ENCODE measurements at regions of chr16 and their contacts with region 1.

Region 1: DNA sequence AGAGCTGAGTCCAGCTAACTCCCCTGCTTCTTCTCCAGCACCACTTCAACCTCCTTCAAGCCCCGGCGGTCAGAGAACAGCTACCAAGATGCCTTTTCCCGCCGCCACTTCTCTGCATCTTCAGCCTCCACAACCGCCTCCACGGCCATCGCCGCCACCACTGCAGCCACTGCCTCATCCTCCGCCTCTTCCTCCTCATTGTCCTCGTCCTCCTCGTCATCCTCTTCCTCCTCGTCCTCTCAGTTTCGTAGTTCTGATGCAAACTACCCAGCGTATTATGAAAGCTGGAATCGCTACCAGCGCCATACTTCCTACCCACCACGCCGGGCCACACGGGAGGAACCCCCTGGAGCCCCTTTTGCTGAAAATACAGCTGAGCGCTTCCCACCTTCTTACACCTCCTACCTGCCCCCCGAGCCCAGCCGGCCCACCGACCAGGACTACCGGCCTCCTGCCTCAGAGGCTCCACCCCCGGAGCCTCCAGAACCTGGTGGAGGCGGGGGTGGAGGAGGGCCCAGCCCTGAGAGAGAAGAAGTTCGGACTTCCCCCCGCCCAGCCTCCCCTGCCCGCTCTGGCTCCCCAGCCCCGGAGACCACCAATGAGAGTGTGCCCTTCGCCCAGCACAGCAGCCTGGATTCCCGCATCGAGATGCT is 7.1 kb downstream of the SETD1A start:
- DNase-seq: no peak
- ATAC-seq: no peak

Region 2: GRCh38 chr16:30775392-30776188 is 189.1 kb before region 1 on chr16:
- intact Hi-C with region 1: no loop called
- DNase-seq: peak; percentile 85 to 88
- ATAC-seq: peak; percentile 81

Region 3: GRCh38 chr16:31094424-31095120 is 129.9 kb after region 1 on chr16 and contains the start of gene VKORC1:
- intact Hi-C with region 1: no loop called
- DNase-seq: peak; percentile 94 to 96
- ATAC-seq: peak; percentile 92
- total RNA-seq, gene VKORC1: 28.7 to 40.5 TPM

Region 4: GRCh38 chr16:31440516-31441184 is 475.9 kb after region 1 on chr16:
- intact Hi-C with region 1: loop called in 1 of 2 experiments (anchors 10 kb)
- DNase-seq: no peak
- ATAC-seq: no peak